AG04449 (cell line): ENCODE measurements at regions of chr9 and their contacts with region 1.

Region 1: DNA sequence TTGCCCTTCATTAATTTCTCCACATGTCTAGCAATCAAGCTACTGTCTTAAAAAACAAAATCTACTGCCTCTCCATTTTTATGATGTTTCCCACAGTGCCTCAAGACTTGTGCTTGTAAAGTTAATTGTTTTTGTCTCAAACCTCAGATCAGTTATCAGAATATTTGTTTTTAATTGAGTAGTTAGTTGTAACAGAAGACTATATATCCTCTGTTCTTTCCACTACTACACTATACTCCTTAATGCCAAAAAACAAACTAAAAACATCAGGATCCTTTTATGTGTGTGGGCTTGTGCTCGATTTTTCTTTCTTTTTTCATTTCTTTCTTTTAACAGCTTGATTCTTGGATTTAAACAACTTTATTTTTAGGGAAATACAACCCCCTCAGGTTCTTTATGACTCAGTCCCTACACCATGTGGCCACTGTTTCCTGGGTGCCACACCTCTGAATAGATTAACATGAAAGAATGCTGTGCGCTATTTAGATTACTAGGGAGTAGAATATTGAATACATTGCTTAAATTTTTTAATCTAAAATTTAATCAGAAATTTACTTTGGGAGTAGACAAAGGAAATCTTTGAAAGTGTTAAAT is 1.2 kb downstream of the ASPN start:
- DNase-seq: no peak
- H3K4me3 ChIP-seq: no peak overlapping the region
- CTCF ChIP-seq: no peak

Region 2: DNA sequence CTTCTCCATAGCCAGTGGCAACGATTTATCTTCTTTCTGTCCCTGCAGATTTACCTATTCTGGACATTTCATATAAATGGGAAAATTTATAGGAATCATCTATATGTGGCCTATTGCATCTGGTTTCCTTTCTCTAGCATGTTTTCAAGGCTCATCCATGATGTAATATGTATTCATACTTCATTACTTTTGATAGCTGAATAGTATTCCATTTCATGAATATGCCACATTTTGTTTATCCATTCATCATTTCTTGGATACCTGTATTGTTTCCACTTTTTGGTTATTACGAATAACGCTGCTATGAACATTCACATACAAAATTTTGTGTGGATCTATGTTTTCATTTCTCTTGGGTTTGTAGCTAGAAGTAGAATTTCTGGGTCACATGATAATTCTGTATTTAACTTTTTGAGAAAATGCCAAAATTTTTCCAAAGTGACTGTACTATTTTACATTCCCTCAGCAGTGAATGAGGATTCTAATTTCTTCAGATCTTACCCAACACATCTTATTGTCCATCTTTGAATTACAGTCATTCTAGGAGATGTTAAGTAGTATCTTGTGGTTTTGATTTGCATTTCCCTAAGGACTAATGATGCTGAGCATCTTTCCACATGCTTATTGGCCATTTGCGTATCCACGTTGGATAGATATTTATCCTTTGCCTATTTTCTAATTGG is 191.3 kb before region 1 on chr9:
- CTCF ChIA-PET with region 1: no interaction called
- POLR2A ChIA-PET with region 1: no interaction called
- DNase-seq: peak; percentile 38
- H3K4me3 ChIP-seq: no peak overlapping the region
- CTCF ChIP-seq: no peak

Region 3: GRCh38 chr9:92425474-92425873 is 55.7 kb before region 1 on chr9:
- CTCF ChIA-PET with region 1: no interaction called
- POLR2A ChIA-PET with region 1: no interaction called
- DNase-seq: no peak
- H3K4me3 ChIP-seq: no peak overlapping the region
- CTCF ChIP-seq: no peak

Region 4: GRCh38 chr9:92463984-92464383 is 17.2 kb before region 1 on chr9:
- CTCF ChIA-PET with region 1: interaction called, 38 read pairs
- POLR2A ChIA-PET with region 1: no interaction called
- DNase-seq: peak; percentile 91
- H3K4me3 ChIP-seq: no peak overlapping the region
- CTCF ChIP-seq: no peak